Panc1 (cell line): ENCODE measurements at regions of chr4 and their contacts with region 1.

Region 1: GRCh38 chr4:143281507-143282190 is 55.0 kb upstream of the GAB1 start:
- DNase-seq: no peak
- ATAC-seq: no peak
- H3K4me3 ChIP-seq: no peak overlapping the region
- H3K27ac ChIP-seq: no peak overlapping the region
- H3K4me1 ChIP-seq: no peaks in the 10 kb centered on the region
- H3K27me3 ChIP-seq: no peaks in the 10 kb centered on the region
- CTCF ChIP-seq: no peak

Region 2: DNA sequence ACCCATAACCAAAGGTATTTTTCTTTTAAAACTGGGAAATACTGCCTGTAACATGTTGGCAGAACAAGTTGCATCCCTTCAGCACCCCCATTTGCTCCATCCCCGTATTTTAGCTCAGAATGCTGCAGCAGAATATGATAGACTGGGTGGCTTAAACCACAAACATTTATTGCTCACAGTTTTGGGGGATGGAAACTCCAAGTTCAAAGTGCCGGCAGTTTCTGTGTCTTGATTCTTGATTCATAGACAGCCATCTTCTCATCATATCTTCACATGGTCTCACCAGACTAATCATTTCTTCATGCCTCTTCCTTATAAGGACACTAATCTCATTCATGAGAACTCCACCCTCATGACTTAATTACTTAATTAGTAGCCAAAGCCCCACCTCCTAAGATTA is 425.1 kb before region 1 on chr4:
- CTCF ChIA-PET with region 1: interaction called, 12 read pairs
- POLR2A ChIA-PET with region 1: no interaction called
- in situ Hi-C with region 1: no loop called
- intact Hi-C with region 1: no loop called
- DNase-seq: no peak
- ATAC-seq: no peak
- H3K4me3 ChIP-seq: no peak overlapping the region
- H3K27ac ChIP-seq: no peak overlapping the region
- H3K4me1 ChIP-seq: no peaks in the 10 kb centered on the region
- H3K27me3 ChIP-seq: no peaks in the 10 kb centered on the region
- CTCF ChIP-seq: no peak